ENCODE measurements at regions of chr1 and their contacts with region 1.

Region 1: DNA sequence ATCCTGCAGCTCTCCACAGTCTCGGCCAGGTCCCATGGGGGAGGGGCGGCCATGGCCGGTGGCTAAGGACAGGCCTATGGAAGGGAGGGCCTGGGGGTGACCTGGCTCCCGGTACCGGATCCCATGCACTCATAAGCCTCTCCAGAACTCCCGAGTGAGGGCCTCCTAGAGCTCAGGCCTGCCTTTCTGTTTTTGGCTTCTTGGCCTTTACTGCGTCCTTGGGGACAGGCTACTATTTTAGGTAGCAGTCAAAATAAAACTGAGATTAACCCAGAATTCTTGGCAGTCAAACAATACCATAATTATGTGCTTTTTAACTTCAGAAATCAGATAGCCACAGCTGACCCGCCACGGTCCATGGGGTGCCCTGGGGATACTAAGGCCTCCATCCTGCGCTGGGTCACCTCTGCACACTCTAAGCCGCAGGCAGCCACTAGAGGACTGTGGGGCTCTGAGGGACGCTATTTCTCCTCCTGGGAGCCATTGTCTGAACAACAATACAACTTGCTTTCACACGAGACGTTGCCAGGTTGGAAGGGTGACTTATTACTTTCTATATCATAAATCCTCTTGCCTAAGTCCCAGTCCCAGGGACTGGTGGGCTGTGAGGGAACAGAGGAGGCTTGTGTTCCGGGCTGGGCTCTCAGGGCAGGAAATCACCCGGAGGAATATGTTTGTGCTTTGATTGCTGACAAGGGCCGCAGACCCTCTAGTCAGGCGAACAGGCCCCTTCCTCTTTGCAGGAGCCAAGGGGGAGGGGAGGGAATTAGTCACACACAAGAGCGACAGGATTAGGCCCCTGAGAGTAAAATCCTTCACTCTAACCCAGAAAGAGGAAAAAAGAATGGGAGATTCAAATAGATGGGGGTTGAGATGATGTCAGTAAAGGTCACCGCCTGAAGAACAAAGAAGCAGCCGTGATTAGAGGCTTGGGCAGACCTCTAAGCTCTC is 40.7 kb upstream of the BCAR3 start:
- DNase-seq: no peak
- H3K4me3 ChIP-seq: no peak overlapping the region
- H3K4me3 Mint-ChIP-seq: no peak overlapping the region
- H3K27ac ChIP-seq: no peak overlapping the region
- H3K27ac Mint-ChIP-seq: no peak overlapping the region
- H3K4me1 ChIP-seq: no peaks in the 10 kb centered on the region
- H3K4me1 Mint-ChIP-seq: no peaks in the 10 kb centered on the region
- H3K27me3 ChIP-seq: no peaks in the 10 kb centered on the region
- H3K27me3 Mint-ChIP-seq: peaks cover 0 to 3% (median 2%) of the 10 kb centered on the region in 3 donors
- CTCF ChIP-seq: no peak

Region 2: DNA sequence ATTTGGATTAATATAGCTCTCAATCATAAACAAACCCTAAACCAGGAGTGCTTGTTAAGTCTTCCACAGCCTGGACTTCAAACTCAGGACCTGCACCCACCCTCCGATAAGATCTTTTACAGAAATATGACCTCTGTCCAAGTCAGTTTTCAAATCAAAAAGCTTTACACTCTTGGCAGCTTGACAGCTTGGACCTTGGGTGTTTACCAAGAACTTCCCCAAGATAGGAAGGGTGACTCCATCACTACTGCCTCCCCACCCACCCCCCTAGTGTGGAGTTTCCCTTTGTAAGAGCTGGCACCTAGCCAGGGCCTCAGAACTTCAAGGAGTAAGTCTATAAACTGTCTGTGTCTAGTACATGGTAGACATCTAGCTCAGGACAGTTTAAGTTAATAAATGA is 50.3 kb before region 1 on chr1:
- intact Hi-C with region 1: loop called in 1 of 2 experiments (anchors 10 kb)
- DNase-seq: peak; percentile 32 to 88 (median 67)
- H3K4me3 ChIP-seq: no peak overlapping the region
- H3K4me3 Mint-ChIP-seq: peak overlapping the region in 1 of 2 donors; percentile 30
- H3K27ac ChIP-seq: peak overlapping the region in 1 of 2 donors; percentile 53
- H3K27ac Mint-ChIP-seq: peak overlapping the region; percentile 15 to 82 (median 72)
- H3K4me1 ChIP-seq: peaks cover 19 to 26% of the 10 kb centered on the region in 2 donors
- H3K4me1 Mint-ChIP-seq: peaks cover 23% of the 10 kb centered on the region
- H3K27me3 ChIP-seq: no peaks in the 10 kb centered on the region
- H3K27me3 Mint-ChIP-seq: peaks cover 0 to 2% (median 2%) of the 10 kb centered on the region in 3 donors
- CTCF ChIP-seq: no peak